ENCODE measurements at regions of chr5 and their contacts with region 1.

Region 1: GRCh38 chr5:32504989-32505596 is 60.6 kb upstream of the ZFR start:
- DNase-seq: peak in 4 of 14 experiments; percentile 20 to 28 (median 27)
- ATAC-seq: peak; percentile 39
- H3K4me3 ChIP-seq: no peak overlapping the region
- H3K4me3 Mint-ChIP-seq: no peak overlapping the region
- H3K27ac ChIP-seq: no peak overlapping the region
- H3K27ac Mint-ChIP-seq: peak overlapping the region; percentile 46
- H3K4me1 ChIP-seq: peaks cover 12% of the 10 kb centered on the region
- H3K4me1 Mint-ChIP-seq: peaks cover 26% of the 10 kb centered on the region
- H3K27me3 ChIP-seq: no peaks in the 10 kb centered on the region
- H3K27me3 Mint-ChIP-seq: no peaks in the 10 kb centered on the region
- CTCF ChIP-seq: no peak

Region 2: DNA sequence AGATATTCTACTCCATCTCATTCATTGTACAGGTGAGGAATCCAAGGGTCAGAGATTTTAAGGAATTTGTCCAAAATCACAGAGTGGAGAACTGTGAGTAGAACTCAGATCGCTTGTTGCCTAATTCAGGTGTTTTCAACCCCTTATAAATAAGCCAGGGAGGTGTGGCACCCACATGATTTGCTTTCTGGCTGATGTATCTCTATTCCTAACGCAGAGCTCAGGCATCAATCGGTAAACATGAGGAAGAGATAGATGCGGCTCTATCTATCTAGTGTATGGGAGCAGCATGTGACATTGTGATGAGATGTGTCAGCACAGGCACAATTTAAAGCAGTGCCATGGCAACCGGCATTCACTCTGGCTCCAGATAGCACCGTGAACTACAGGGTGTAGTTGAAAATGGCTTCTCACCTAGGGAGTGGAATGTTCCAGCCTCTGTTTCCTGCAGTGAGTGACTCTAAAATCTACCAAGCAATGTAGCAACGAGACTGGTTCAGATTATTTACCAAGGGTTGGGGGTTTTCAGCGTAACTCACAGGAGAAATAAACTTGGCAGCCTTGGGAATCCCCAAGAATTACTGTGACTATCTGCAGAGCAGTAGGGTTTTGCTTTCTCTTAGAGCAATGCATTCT is 26.9 kb after region 1 on chr5:
- CTCF ChIA-PET with region 1: no interaction called
- POLR2A ChIA-PET with region 1: interaction called, 11 read pairs
- intact Hi-C with region 1: loop called in 1 of 2 experiments (anchors 1 kb)
- DNase-seq: peak; percentile 27 to 86 (median 45)
- ATAC-seq: peak; percentile 74
- H3K4me3 ChIP-seq: peak overlapping the region; percentile 53
- H3K4me3 Mint-ChIP-seq: peak overlapping the region; percentile 87
- H3K27ac ChIP-seq: peak overlapping the region; percentile 76 to 88
- H3K27ac Mint-ChIP-seq: peak overlapping the region; percentile 94
- H3K4me1 ChIP-seq: peaks cover 36% of the 10 kb centered on the region
- H3K4me1 Mint-ChIP-seq: peaks cover 53% of the 10 kb centered on the region
- H3K27me3 ChIP-seq: no peaks in the 10 kb centered on the region
- H3K27me3 Mint-ChIP-seq: no peaks in the 10 kb centered on the region
- CTCF ChIP-seq: no peak

Region 3: DNA sequence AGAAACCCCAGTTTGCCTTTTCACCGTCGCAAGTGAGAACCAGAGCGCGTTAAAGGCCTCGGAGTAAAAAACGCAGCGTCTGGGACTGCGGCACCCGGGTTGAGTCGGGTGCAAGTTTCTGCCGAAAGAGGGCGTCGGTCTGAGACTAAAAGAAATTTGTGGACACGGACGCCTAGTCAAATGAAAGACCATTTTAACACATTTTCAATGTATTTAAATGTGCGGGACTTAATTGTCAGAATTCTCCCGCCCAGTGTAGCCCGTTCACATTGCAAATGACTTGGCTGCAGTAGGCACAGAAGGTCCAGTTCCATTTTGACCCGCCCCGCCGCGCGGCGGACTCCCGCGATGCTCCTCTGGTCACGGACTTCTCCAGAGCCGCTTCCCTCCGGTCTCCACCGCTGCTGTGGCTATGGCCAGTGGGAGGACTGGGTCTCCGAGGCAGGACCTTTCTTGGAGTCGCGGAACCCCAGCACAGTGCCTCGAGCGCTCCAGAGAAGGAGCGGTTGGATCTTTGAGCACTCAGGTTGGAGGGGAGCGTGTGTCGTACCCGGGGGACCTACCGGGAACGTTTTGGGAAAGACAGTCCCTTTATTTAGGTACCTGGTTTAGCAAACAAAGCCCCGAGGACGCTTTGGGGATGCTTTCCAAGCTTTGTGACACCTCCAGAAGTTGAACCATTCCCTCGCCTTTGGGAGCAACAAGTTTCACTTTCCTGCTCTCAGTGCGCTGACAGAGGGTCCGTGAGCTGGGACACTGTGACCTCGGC is 204.9 kb after region 1 on chr5:
- CTCF ChIA-PET with region 1: no interaction called
- POLR2A ChIA-PET with region 1: no interaction called
- intact Hi-C with region 1: no loop called
- DNase-seq: peak in 6 of 14 experiments; percentile 9 to 42 (median 21)
- ATAC-seq: no peak
- H3K4me3 ChIP-seq: peak overlapping the region; percentile 49
- H3K4me3 Mint-ChIP-seq: peak overlapping the region; percentile 75
- H3K27ac ChIP-seq: no peak overlapping the region
- H3K27ac Mint-ChIP-seq: no peak overlapping the region
- H3K4me1 ChIP-seq: peaks cover 27% of the 10 kb centered on the region
- H3K4me1 Mint-ChIP-seq: peaks cover 26% of the 10 kb centered on the region
- H3K27me3 ChIP-seq: peaks cover 48 to 53% of the 10 kb centered on the region in 2 experiments
- H3K27me3 Mint-ChIP-seq: peaks cover 70% of the 10 kb centered on the region
- CTCF ChIP-seq: no peak